Activated CD4-positive, alpha-beta memory T cell treated with anti-CD3 and anti-CD28 coated beads for 36 hours (primary cell): ENCODE measurements at regions of chr16 and their contacts with region 1.

Region 1: DNA sequence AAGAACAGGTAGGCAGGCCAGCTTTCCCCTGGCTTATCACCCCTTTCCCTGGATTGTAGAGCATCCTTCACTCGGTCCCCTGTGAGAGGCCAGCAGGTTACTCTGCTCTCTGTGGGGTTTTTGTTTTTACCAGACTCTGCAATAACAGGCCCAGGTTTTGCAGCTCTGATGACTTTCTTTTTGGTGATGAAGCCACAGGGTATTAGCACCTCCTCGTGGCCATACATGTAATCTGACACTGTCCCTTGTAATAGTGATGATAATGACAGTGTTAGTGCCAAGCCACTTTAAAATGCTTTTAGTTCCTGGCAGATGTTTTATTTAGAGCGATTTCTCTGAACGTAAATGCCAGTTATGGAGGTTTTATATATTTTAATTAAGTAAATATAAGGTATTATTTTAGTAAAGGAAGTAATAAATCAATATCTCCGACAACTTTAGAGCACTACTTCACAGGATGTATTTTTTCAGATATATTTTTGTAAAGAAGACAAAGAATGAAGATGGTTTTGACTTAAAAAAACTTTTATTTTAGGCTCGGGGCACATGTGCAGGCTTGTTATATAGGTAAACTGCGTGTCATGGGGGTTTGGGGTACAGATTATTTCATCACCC is 38.0 kb upstream of the CPHXL start:
- DNase-seq: peak; percentile 70
- H3K4me3 Mint-ChIP-seq: no peak overlapping the region
- H3K27ac Mint-ChIP-seq: no peak overlapping the region
- H3K4me1 Mint-ChIP-seq: peaks cover 11% of the 10 kb centered on the region
- H3K27me3 Mint-ChIP-seq: peaks cover 4% of the 10 kb centered on the region

Region 2: GRCh38 chr16:75238132-75238852 is 526.0 kb before region 1 on chr16:
- CTCF ChIA-PET with region 1: interaction called, 11 read pairs
- POLR2A ChIA-PET with region 1: no interaction called
- intact Hi-C with region 1: loop called (anchors 10 kb)
- DNase-seq: no peak
- H3K4me3 Mint-ChIP-seq: no peak overlapping the region
- H3K27ac Mint-ChIP-seq: no peak overlapping the region
- H3K4me1 Mint-ChIP-seq: peaks cover 2% of the 10 kb centered on the region
- H3K27me3 Mint-ChIP-seq: no peaks in the 10 kb centered on the region

Region 3: GRCh38 chr16:75519881-75520280 is 244.4 kb before region 1 on chr16:
- CTCF ChIA-PET with region 1: interaction called, 7 read pairs
- POLR2A ChIA-PET with region 1: no interaction called
- intact Hi-C with region 1: loop called (anchors 1 kb)
- DNase-seq: no peak
- H3K4me3 Mint-ChIP-seq: no peak overlapping the region
- H3K27ac Mint-ChIP-seq: no peak overlapping the region
- H3K4me1 Mint-ChIP-seq: peaks cover 10% of the 10 kb centered on the region
- H3K27me3 Mint-ChIP-seq: no peaks in the 10 kb centered on the region

Region 4: DNA sequence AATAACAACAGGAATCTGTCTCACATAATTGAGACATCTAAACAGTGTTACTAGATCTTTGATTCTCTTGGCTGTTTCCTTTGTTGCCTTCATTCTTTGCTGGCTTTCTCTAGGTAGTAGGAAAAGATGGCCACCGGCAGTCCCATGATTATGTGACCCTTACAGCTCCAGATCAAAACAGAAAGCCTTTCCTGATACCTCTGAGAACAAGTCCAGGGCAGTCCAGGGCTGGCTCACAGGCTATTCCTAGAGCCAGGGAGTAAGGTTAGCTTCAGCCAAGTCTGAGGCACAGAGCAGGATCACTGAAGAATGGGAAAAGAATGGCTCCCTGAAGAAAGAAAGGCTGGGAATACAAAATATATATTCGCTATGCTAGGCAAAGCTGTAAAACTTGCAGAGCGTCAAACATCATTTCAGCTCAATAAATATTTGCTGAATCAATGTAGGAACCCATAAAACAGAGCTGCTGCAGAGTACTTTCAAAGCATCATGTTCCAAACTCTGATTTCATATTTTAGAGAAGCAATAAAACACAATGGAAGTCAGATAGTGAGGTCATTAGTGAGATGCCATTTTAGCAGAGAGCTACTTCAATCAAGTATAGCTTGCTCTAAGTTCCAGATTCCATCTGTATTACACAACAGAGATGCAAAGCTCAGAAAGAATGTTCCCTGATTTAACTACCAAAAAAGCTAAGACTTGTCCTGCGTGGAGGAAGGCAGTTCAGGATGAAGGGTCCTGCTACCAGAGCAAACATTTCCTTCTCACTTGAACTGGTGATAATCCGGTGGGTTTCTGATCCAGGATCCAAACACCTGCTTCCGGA is 164.6 kb before region 1 on chr16:
- CTCF ChIA-PET with region 1: no interaction called
- POLR2A ChIA-PET with region 1: no interaction called
- intact Hi-C with region 1: no loop called
- DNase-seq: no peak
- H3K4me3 Mint-ChIP-seq: no peak overlapping the region
- H3K27ac Mint-ChIP-seq: no peak overlapping the region
- H3K4me1 Mint-ChIP-seq: peaks cover 6% of the 10 kb centered on the region
- H3K27me3 Mint-ChIP-seq: no peaks in the 10 kb centered on the region

Region 5: DNA sequence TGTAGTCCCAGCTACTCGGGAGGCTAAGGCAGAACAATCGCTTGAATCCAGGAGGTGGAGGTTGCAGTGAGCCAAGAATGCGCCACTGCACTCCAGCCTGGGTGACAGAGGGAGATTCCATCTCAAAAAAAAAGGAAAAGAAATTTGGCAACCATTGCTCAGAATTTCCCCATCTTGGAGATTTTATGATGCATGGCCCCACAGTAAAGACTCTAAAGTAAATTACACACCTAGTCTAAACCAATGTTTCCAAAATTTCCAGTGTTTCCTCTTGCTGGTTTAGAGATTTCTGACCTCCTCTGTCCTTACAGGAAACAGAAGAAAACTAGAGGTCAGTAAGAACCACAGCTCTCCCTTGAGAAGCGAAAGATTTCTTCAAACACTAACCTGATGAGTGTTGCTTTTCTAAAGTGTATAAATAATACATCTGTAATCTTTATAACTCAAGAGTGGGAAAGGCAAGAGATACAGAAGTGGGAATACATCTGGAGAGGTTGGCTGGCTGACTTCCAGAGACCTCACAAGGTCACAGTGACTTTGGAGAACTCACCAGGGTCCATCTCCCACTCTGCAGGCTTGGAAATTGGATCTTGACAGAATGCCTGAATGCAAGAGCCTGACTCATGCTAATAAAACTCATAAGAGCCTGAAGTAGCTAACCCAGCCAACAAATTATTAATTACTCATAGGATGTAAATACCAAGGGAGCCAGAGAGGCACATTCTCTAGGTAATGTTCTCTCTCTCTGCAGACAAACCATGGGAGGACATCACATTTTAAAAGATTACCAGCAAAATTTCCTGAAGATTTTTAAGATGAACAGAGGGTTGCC is 150.0 kb before region 1 on chr16:
- CTCF ChIA-PET with region 1: no interaction called
- POLR2A ChIA-PET with region 1: no interaction called
- intact Hi-C with region 1: loop called (anchors 1 kb)
- DNase-seq: no peak
- H3K4me3 Mint-ChIP-seq: no peak overlapping the region
- H3K27ac Mint-ChIP-seq: no peak overlapping the region
- H3K4me1 Mint-ChIP-seq: peaks cover 33% of the 10 kb centered on the region
- H3K27me3 Mint-ChIP-seq: no peaks in the 10 kb centered on the region

Region 6: GRCh38 chr16:75695704-75696103 is 68.6 kb before region 1 on chr16:
- CTCF ChIA-PET with region 1: no interaction called
- POLR2A ChIA-PET with region 1: no interaction called
- intact Hi-C with region 1: loop called (anchors 10 kb)
- DNase-seq: no peak
- H3K4me3 Mint-ChIP-seq: no peak overlapping the region
- H3K27ac Mint-ChIP-seq: no peak overlapping the region
- H3K4me1 Mint-ChIP-seq: no peaks in the 10 kb centered on the region
- H3K27me3 Mint-ChIP-seq: no peaks in the 10 kb centered on the region

Region 7: GRCh38 chr16:76081967-76082366 is 317.7 kb after region 1 on chr16:
- CTCF ChIA-PET with region 1: no interaction called
- POLR2A ChIA-PET with region 1: no interaction called
- intact Hi-C with region 1: no loop called
- DNase-seq: no peak
- H3K4me3 Mint-ChIP-seq: no peak overlapping the region
- H3K27ac Mint-ChIP-seq: no peak overlapping the region
- H3K4me1 Mint-ChIP-seq: no peaks in the 10 kb centered on the region
- H3K27me3 Mint-ChIP-seq: no peaks in the 10 kb centered on the region

Region 8: GRCh38 chr16:76121636-76122035 is 357.4 kb after region 1 on chr16:
- CTCF ChIA-PET with region 1: no interaction called
- POLR2A ChIA-PET with region 1: no interaction called
- intact Hi-C with region 1: no loop called
- DNase-seq: no peak
- H3K4me3 Mint-ChIP-seq: no peak overlapping the region
- H3K27ac Mint-ChIP-seq: no peak overlapping the region
- H3K4me1 Mint-ChIP-seq: no peaks in the 10 kb centered on the region
- H3K27me3 Mint-ChIP-seq: no peaks in the 10 kb centered on the region